PC-9 (cell line): ENCODE measurements at regions of chr11 and their contacts with region 1.

Region 1: DNA sequence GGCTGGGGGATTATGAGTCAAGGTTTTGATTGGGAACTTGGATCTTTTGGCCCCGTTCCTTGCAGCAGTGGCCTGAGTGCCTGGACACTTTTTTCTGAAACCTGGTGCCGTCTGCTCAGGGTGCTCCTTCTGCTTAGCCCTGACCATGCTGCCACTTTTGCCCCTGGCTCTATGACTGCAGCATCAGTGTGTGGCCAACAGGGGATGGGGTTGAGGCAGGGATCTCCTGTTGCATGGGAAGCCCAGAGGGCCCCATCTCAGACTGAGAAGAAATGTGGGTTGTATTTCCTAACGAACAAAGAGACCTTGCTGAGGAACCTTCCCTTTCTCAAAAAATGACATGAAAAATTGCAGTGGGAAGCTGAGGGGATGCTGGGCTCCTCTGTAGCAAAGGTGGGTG is 18.7 kb downstream of the POU2F3 start:
- DNase-seq: no peak
- H3K4me3 ChIP-seq: no peak overlapping the region
- H3K27ac ChIP-seq: no peak overlapping the region
- H3K4me1 ChIP-seq: no peaks in the 10 kb centered on the region
- H3K27me3 ChIP-seq: peaks cover 75% of the 10 kb centered on the region
- CTCF ChIP-seq: no peak; the same call in 1 of the 2 replicates

Region 2: GRCh38 chr11:120288016-120288415 is 29.4 kb after region 1 on chr11:
- CTCF ChIA-PET with region 1: interaction called, 10 read pairs
- POLR2A ChIA-PET with region 1: no interaction called
- intact Hi-C with region 1: no loop called
- DNase-seq: peak in 1 of 2 experiments; percentile 70
- H3K4me3 ChIP-seq: no peak overlapping the region
- H3K27ac ChIP-seq: no peak overlapping the region
- H3K4me1 ChIP-seq: peaks cover 22% of the 10 kb centered on the region
- H3K27me3 ChIP-seq: no peaks in the 10 kb centered on the region
- CTCF ChIP-seq: no peak